Sigmoid colon (tissue), 7 donors: ENCODE measurements at regions of chr5 and their contacts with region 1.

Region 1: DNA sequence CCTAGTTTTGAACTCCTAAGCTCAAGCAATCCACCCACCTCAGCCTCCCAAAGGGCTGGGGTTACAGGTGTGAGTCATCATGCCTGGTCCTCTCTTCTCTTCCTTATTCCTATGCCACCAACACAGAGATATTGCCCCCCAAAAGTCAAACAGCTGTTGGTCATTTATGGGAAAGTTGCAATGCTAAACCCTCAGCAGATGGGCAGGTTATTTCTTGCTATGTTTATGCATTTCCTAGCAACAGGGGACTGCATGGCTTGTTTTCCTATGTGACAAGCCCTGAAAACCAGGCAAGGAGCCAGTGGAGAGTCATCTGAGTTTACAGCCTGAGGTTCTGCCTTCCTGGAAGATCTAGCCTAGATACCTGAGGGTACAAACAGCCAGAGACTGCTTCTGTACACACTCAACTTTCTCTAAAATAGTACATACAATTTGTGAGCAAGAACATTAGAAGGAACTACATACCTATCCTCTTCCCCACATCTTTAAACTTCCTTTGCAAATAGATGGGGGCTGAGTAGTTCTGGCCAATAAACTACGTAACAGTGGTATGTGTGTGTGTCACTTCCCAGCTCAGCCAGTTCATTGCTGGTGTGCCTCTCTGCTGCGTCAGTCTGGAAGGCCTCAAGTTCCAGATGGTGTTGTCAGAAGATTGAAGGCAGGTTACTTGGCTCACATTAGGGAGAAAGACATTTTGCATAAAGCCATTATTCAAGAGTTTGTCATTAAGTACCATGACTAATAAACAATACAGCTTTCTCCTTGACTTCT is 65.4 kb downstream of the CSNK1A1 start:
- DNase-seq: peak; percentile 96
- H3K4me3 ChIP-seq: no peak overlapping the region
- H3K27ac ChIP-seq: peak overlapping the region; percentile 86 to 92 (median 90)
- H3K4me1 ChIP-seq: peaks cover 0 to 97% (median 92%) of the 10 kb centered on the region in 4 donors
- H3K27me3 ChIP-seq: no peaks in the 10 kb centered on the region
- CTCF ChIP-seq: no peak
- EP300 ChIP-seq: peak; percentile 49 to 98 (median 97)
- POLR2A ChIP-seq: no peak

Region 2: GRCh38 chr5:149551200-149552037 is 65.6 kb after region 1 on chr5 and contains the start of gene CSNK1A1:
- intact Hi-C with region 1: loop called (anchors 5 kb)
- DNase-seq: peak; percentile 99
- H3K4me3 ChIP-seq: peak within 1 kb of the TSS; percentile 93 to 100 (median 98)
- H3K27ac ChIP-seq: peak within 1 kb of the TSS; percentile 99 to 100 (median 100)
- H3K4me1 ChIP-seq: peaks cover 0 to 34% (median 30%) of the 10 kb centered on the region in 4 donors
- H3K27me3 ChIP-seq: no peaks in the 10 kb centered on the region
- CTCF ChIP-seq: peak; percentile 73 to 97 (median 86)
- EP300 ChIP-seq: peak in 2 of 4 donors; percentile 5 to 67
- POLR2A ChIP-seq: peak; percentile 89 to 91
- total RNA-seq, gene CSNK1A1: 214 to 298 (median 231) TPM